ENCODE measurements at regions of chr1 and their contacts with region 1.

Region 1: DNA sequence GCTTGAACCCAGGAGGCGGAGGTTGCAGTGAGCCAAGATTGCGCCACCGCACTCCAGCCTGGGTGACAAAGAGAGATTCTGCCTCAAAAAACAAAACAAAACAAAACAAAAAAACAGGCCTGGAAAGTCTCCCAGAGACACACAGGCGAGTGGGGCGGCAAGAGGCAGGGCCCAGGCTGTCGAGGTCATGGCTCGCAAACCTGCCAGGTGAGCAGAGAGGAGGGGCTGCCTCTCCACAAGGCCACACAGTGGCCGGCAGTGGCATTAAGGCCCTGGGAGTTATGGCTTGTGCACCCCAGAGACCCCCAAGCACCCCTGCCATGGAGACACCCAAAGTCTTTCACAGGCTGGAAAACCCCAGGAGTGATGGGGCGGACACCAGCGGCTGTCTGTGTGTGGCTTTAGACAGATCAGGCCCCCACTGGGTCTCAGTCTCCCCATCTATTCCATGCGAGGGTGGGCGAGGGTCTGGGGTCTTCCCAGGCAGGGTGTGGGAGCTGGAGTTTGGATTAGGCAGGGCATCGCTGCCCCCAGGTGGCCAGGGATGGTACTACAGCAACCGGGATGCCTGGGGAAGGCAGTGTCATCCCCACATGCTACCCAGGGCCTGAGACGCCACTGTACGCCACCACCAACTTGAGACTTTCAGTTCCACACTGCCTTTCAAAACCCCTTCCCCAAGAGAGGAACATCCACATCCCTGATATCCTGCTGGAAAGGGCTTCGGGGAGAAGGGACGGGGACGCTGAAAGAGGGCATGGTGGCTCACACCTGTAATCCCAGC is 7.3 kb upstream of the CTRC start:
- DNase-seq: peak in 4 of 5 donors; percentile 67 to 82 (median 68)
- ATAC-seq: peak; percentile 22 to 77 (median 58)
- H3K4me3 ChIP-seq: no peak overlapping the region
- H3K27ac ChIP-seq: no peak overlapping the region
- H3K4me1 ChIP-seq: peaks cover 0 to 25% (median 11%) of the 10 kb centered on the region in 12 donors
- H3K27me3 ChIP-seq: no peaks in the 10 kb centered on the region
- CTCF ChIP-seq: peak; percentile 86 to 98 (median 96)
- POLR2A ChIP-seq: no peak

Region 2: GRCh38 chr1:15128520-15129313 is 302.3 kb before region 1 on chr1:
- intact Hi-C with region 1: loop called in 3 of 10 experiments (anchors 5 to 10 kb)
- DNase-seq: peak; percentile 49 to 77 (median 65)
- ATAC-seq: peak; percentile 76 to 93 (median 88)
- H3K4me3 ChIP-seq: no peak overlapping the region
- H3K27ac ChIP-seq: no peak overlapping the region
- H3K4me1 ChIP-seq: peaks cover 0 to 5% (median 0%) of the 10 kb centered on the region in 12 donors
- H3K27me3 ChIP-seq: peaks cover 0 to 5% (median 0%) of the 10 kb centered on the region in 9 donors
- CTCF ChIP-seq: peak; percentile 69 to 93 (median 87)
- POLR2A ChIP-seq: no peak

Region 3: DNA sequence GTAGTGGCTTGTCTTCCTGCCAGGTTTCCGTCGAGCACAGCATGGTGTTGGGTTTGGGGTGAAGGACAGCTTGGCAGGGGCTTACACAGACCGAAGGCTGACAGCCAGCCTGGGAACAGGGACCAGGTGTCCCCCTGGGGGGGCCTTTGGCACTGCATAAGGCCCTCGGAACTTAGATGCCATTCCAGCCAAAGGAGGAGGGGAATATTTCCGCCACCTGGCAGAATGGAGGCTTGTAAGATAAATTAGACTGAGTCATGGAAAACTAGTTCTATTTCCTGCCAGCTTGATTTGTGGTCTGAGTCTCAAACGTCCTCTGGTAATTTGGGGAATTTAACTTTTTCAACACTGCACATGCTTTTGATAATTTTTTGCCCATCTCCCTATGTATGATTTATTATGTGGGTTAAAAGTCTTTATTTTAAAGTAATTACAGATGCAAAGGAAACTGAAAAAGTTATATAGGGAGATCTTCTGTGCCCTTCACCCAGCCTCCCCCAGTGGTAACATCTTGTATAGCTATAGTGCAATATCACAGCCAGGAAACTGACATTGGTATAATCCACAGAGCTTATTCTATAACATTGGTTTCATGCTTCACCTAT is 288.9 kb before region 1 on chr1:
- intact Hi-C with region 1: loop called in 1 of 10 experiments (anchors 10 kb)
- DNase-seq: peak in 4 of 5 donors; percentile 30 to 85 (median 54)
- ATAC-seq: peak; percentile 68 to 92 (median 86)
- H3K4me3 ChIP-seq: no peak overlapping the region
- H3K27ac ChIP-seq: peak overlapping the region in 1 of 12 donors; percentile 63
- H3K4me1 ChIP-seq: peaks cover 0 to 18% (median 0%) of the 10 kb centered on the region in 12 donors
- H3K27me3 ChIP-seq: peaks cover 0 to under 1% (median 0%) of the 10 kb centered on the region in 9 donors
- CTCF ChIP-seq: peak in 1 of 12 donors; percentile 9
- POLR2A ChIP-seq: no peak

Region 4: GRCh38 chr1:15152318-15153183 is 278.4 kb before region 1 on chr1:
- intact Hi-C with region 1: loop called in 5 of 10 experiments (anchors 5 to 10 kb)
- DNase-seq: peak; percentile 82 to 91 (median 87)
- ATAC-seq: peak; percentile 55 to 79 (median 70)
- H3K4me3 ChIP-seq: peak overlapping the region; percentile 57 to 90 (median 80)
- H3K27ac ChIP-seq: peak overlapping the region; percentile 7 to 92 (median 76)
- H3K4me1 ChIP-seq: peaks cover 0 to 53% (median 15%) of the 10 kb centered on the region in 12 donors
- H3K27me3 ChIP-seq: peaks cover 0 to 9% (median 0%) of the 10 kb centered on the region in 9 donors
- CTCF ChIP-seq: peak; percentile 54 to 79 (median 66)
- POLR2A ChIP-seq: no peak

Region 5: GRCh38 chr1:15323351-15323988 is 107.5 kb before region 1 on chr1:
- intact Hi-C with region 1: loop called (anchors 1 to 2 kb)
- DNase-seq: peak; percentile 65 to 78 (median 77)
- ATAC-seq: peak; percentile 79 to 90 (median 86)
- H3K4me3 ChIP-seq: peak overlapping the region in 1 of 12 donors; percentile 2
- H3K27ac ChIP-seq: peak overlapping the region in 6 of 12 donors; percentile 13 to 57 (median 36)
- H3K4me1 ChIP-seq: peaks cover 0 to 20% (median 8%) of the 10 kb centered on the region in 12 donors
- H3K27me3 ChIP-seq: no peaks in the 10 kb centered on the region
- CTCF ChIP-seq: peak; percentile 95 to 99 (median 98)
- POLR2A ChIP-seq: no peak

Region 6: GRCh38 chr1:15328351-15329103 is 102.5 kb before region 1 on chr1:
- intact Hi-C with region 1: loop called (anchors 1 to 2 kb)
- DNase-seq: peak; percentile 64 to 83 (median 81)
- ATAC-seq: peak; percentile 72 to 90 (median 80)
- H3K4me3 ChIP-seq: peak overlapping the region in 2 of 12 donors; percentile 8 to 13
- H3K27ac ChIP-seq: peak overlapping the region in 10 of 12 donors; percentile 46 to 78 (median 58)
- H3K4me1 ChIP-seq: peaks cover 3 to 39% (median 24%) of the 10 kb centered on the region in 12 donors
- H3K27me3 ChIP-seq: no peaks in the 10 kb centered on the region
- CTCF ChIP-seq: no peak
- POLR2A ChIP-seq: no peak

Region 7: DNA sequence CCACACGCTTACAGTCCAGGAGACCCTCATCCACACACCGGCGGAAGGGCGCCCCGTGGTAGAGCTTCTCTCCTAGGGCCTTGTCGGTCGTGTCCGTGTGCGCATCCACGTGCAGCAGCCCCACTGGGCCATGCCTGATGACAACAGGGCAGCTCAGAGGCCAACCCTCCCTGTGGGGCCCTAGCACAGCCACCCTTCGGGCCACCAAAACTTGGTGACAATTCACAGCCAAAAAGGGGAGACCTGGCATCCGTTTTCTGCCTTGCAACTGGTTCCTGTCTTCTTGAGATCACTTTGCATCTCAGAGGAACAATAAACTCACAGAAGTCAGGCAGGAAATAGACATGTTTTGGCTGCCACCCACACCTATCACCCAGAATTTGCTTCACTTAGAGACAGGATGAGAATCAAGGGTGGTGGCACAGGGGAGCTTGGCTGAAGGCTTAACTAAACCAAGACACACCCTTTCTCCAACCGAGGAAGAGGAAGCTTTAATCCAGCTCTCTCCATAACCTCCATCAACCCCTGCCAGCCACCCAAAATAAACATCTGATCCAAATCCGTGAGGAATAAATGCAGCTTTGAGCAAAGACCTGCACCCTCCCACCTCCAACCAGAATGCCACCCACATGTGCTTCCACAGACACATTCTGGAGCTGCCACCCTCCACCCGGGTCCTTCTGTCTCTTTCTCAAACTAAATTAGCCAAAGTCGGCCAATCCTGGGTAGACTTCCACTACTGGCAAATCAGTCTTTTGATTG is 148.1 kb after region 1 on chr1:
- intact Hi-C with region 1: no loop called
- DNase-seq: no peak
- ATAC-seq: no peak
- H3K4me3 ChIP-seq: no peak overlapping the region
- H3K27ac ChIP-seq: peak overlapping the region in 1 of 12 donors; percentile 89
- H3K4me1 ChIP-seq: peaks cover 0 to 32% (median under 1%) of the 10 kb centered on the region in 12 donors
- H3K27me3 ChIP-seq: peaks cover 0 to 8% (median 0%) of the 10 kb centered on the region in 9 donors
- CTCF ChIP-seq: no peak
- POLR2A ChIP-seq: no peak